Activated naive CD4-positive, alpha-beta T cell treated with anti-CD3 and anti-CD28 coated beads for 36 hours (primary cell): ENCODE measurements at regions of chr7 and their contacts with region 1.

Region 1: DNA sequence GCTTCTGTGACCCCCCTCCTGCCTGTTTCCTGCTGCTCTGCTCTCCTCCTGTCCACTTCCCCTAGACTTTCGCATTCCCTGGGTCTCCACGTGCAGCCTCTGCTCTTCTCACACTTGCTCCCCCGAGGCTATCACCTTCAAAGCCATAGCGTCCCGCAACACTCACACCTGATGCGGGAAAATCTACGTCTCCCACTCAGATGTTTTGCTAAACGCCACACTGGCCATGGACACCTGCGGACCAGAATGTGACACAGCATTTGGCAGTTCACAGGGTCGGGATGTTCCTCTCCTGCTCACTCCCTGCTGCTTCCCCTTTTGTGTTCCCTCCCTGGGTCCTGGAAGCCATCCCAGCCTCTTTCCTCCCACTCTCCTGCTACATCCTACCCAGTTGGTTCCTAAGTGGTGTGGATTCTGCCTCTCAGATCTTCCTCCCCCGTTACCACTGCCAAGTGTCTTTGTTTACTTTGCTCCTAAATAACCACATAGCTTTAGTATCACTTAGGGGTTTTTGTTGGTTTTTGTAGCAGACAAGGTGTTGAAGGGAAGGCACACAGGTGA is 33.7 kb upstream of the RBM33 start:
- DNase-seq: no peak
- H3K4me3 Mint-ChIP-seq: no peak overlapping the region
- H3K27ac Mint-ChIP-seq: no peak overlapping the region
- H3K4me1 Mint-ChIP-seq: no peaks in the 10 kb centered on the region
- H3K27me3 Mint-ChIP-seq: peaks cover 5% of the 10 kb centered on the region

Region 2: DNA sequence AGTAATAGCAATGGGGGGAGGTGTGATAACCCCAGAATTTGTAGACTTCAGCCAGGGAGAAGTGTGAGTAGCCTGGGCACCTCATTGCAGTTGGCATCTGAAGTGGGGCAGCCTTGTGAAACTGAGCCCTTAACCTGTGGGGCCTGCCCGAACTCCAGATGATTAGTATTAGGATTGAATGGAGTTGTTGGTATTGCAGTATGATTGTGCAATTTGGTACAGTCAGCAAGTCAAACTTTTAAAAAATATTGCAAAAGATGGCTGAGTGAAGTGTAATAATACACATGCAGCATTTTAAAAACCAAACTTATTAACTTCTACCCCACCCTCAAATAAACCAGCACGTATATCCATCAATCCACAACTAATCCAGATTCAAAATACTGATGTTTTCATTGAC is 43.1 kb after region 1 on chr7:
- CTCF ChIA-PET with region 1: no interaction called
- intact Hi-C with region 1: no loop called
- DNase-seq: no peak
- H3K4me3 Mint-ChIP-seq: no peak overlapping the region
- H3K27ac Mint-ChIP-seq: no peak overlapping the region
- H3K4me1 Mint-ChIP-seq: peaks cover 72% of the 10 kb centered on the region
- H3K27me3 Mint-ChIP-seq: no peaks in the 10 kb centered on the region

Region 3: DNA sequence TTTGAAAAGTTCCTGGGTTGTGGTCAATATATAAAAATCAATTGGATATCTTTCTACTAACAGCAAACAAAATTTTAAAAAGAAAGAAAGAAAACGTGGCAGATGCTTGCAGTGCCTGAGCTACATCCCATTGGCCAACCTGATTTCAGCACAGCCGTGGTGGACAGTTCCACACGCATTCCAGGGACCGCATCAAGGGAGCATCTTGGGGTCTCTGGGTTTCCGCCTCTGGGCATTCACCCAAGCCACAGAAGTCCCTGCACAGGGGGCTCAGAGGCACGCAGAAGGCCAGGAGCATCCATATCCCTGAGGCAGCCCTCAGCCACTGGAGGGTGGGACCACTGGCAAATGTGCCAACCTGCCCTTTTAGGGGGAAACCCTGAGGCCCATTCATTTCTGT is 775.4 kb after region 1 on chr7:
- CTCF ChIA-PET with region 1: no interaction called
- intact Hi-C with region 1: loop called (anchors 5 kb)
- DNase-seq: no peak
- H3K4me3 Mint-ChIP-seq: no peak overlapping the region
- H3K27ac Mint-ChIP-seq: no peak overlapping the region
- H3K4me1 Mint-ChIP-seq: no peaks in the 10 kb centered on the region
- H3K27me3 Mint-ChIP-seq: peaks cover 3% of the 10 kb centered on the region